Activated CD8-positive, alpha-beta memory T cell treated with anti-CD3 and anti-CD28 coated beads, Interleukin-2, amount 10 ng/mL, durations not matched to agents 7 days and 5 days (primary cell): ENCODE measurements at regions of chr9 and their contacts with region 1.

Region 1: DNA sequence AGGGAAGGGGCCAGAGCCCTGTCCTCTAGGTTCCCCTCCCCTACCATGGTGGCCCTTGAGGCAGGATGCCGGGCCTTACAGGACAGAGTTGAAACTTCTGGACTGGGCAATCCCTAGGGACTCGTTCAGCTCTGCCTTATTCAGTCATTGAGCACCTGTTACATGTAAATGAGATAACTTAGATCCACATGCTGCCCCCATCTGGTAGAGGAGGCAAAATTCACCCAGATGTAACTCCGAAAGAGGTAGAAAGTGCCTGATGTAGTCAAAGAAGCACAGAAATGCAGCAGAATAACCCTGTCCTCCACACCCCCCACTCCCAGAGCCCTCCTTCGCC is 1.5 kb downstream of the GGTA1 start:
- DNase-seq: peak; percentile 74
- ATAC-seq: peak; percentile 71
- H3K4me3 Mint-ChIP-seq: peak overlapping the region; percentile 59
- H3K27ac Mint-ChIP-seq: no peak overlapping the region
- H3K4me1 Mint-ChIP-seq: peaks cover 19% of the 10 kb centered on the region
- H3K27me3 Mint-ChIP-seq: peaks cover 73% of the 10 kb centered on the region

Region 2: DNA sequence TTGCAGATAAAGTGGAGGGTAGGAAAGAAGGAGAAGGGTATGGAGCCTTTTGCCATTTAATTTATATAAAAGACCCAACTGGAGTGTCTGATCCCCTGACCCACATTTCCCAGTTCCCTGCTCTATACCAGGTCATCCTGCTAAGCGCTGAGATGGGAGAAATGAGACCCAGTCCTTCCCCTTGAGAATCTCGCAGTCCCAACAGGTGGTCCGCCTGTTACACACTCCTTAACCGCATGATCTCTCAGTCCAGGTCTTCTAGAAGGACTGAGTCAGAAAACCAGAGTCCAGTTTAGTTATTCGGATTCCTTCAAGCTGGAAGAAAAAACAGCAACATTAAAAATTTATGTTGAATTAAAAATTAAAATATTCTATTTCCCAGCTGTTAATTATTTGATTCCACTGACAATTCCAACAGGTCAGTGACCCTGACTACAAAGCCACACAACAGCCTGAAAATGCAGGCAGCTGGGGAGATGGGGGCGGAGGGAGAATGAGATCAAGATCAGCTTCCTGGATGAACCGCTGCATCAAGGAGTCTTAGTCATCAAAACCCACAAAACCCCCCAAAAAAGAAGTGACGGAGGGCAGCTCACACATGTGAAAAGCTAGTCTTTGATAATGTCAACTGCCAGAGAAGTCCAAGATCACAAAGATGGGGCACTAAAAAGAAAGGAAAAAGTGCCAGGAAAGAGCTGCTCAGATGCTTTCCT is 42.4 kb before region 1 on chr9:
- CTCF ChIA-PET with region 1: interaction called, 11 read pairs
- DNase-seq: peak; percentile 85
- ATAC-seq: peak; percentile 91
- H3K4me3 Mint-ChIP-seq: no peak overlapping the region
- H3K27ac Mint-ChIP-seq: peak overlapping the region; percentile 67
- H3K4me1 Mint-ChIP-seq: peaks cover 46% of the 10 kb centered on the region
- H3K27me3 Mint-ChIP-seq: peaks cover 53% of the 10 kb centered on the region